Activated CD4-positive, alpha-beta T cell treated with anti-CD3 and anti-CD28 coated beads for 36 hours (primary cell): ENCODE measurements at regions of chr10 and their contacts with region 1.

Region 1: DNA sequence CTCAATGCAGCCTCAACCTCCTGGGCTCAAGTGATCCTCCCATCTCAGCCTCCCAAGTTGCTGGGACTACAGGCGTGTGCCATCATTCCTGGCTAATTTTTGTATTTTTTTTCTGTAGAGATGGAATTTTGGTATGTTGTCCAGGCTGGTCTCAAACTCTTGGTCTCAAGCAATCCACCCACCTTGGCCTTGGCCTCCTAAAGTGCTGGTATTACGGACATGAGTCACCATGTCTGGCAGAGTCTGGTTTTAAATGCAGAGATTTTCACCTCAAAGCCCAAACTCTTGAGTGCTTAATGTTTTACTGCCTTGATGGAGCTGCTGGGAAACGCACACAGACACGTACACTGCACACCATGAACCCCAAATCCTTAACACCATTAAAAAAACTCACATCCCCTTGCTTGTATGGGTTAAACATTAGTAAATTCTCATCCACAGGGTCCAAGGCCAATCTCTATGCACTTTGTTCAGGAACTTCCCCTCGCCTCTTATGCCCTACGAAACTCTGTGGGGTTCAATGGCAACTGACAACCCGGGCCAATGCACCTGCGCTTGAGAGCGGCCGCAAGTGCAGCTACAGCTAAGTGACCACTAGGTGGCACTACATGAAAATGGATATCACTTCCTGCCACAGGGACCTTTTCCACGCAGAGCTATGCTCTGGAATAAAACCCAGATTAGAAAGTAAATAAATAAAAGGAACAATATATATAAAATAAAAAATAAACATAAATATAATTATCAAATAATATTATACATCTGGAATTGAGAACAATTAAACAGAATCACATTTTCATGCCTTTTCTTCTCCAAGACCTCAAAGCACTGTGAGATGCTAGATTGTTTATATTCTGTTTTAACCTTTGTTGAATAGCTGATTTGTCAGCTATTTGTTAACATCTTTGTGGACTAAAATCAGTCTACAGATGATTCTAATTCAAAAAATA is 66.9 kb upstream of the AFAP1L2 start:
- DNase-seq: peak; percentile 79
- ATAC-seq: peak; percentile 87
- H3K4me3 Mint-ChIP-seq: no peak overlapping the region
- H3K27ac Mint-ChIP-seq: peak overlapping the region; percentile 27
- H3K4me1 Mint-ChIP-seq: peaks cover 21% of the 10 kb centered on the region
- H3K27me3 Mint-ChIP-seq: no peaks in the 10 kb centered on the region

Region 2: DNA sequence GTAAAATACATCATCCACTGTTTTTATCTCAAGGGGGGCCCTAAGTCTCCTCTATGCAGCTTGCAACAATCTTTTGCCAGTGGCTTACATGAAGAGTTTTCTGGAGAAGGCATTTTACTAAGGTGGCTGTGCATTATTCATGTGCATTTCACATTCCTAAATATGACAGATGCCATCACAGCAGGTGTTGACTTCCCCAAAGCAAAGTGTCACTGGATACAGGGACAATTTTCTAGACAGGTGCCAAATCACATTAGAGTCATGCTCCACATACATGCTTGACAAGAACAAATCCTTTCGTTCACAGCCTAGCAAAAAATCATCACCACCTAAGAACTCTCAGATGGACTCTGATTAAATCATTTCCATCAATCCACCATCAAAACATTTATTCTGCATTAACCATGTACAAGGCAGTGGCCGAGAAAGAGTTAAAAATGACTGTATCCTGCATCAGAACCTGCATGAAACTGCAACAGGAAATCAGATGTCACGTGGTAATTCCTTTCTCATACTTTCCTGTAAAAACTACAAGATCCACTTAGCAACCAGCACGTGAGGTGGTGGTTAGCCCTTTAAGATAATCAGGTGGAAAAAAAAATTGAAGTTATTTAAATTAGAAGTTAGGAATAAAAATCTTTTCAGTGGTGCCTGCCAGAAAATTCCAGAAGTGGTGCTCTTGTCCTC is 21.3 kb after region 1 on chr10:
- CTCF ChIA-PET with region 1: interaction called, 69 read pairs
- POLR2A ChIA-PET with region 1: interaction called, 4 read pairs
- intact Hi-C with region 1: no loop called
- DNase-seq: peak; percentile 69
- ATAC-seq: peak; percentile 60
- H3K4me3 Mint-ChIP-seq: peak overlapping the region; percentile 34
- H3K27ac Mint-ChIP-seq: peak overlapping the region; percentile 92
- H3K4me1 Mint-ChIP-seq: peaks cover 90% of the 10 kb centered on the region
- H3K27me3 Mint-ChIP-seq: no peaks in the 10 kb centered on the region

Region 3: DNA sequence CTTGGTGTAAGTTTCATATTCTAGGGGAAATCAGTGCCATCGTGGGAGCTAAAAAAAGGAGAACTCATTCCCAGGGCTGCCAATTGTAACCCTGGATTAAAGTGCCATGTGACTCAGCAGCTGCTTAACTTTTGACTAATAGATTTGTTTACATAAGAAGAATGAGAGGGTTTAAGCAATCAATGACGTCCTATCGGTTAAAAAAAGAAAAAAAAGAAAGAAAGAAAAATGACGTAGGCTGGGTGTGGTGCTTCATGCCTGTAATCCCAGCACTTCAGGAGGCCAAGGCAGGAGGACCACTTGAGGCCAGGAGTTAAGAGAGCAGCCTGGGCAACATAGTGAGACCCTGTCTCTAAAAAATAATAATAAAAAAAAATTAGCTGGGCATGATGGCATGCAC is 49.2 kb after region 1 on chr10:
- CTCF ChIA-PET with region 1: interaction called, 34 read pairs
- POLR2A ChIA-PET with region 1: interaction called, 6 read pairs
- intact Hi-C with region 1: no loop called
- DNase-seq: no peak
- ATAC-seq: peak; percentile 17
- H3K4me3 Mint-ChIP-seq: peak overlapping the region; percentile 54
- H3K27ac Mint-ChIP-seq: peak overlapping the region; percentile 92
- H3K4me1 Mint-ChIP-seq: peaks cover 95% of the 10 kb centered on the region
- H3K27me3 Mint-ChIP-seq: no peaks in the 10 kb centered on the region

Region 4: GRCh38 chr10:114550756-114551635 is 79.8 kb after region 1 on chr10:
- CTCF ChIA-PET with region 1: interaction called, 79 read pairs
- POLR2A ChIA-PET with region 1: interaction called, 3 read pairs
- intact Hi-C with region 1: loop called (anchors 1 kb)
- DNase-seq: no peak
- ATAC-seq: no peak
- H3K4me3 Mint-ChIP-seq: no peak overlapping the region
- H3K27ac Mint-ChIP-seq: no peak overlapping the region
- H3K4me1 Mint-ChIP-seq: peaks cover 28% of the 10 kb centered on the region
- H3K27me3 Mint-ChIP-seq: no peaks in the 10 kb centered on the region

Region 5: GRCh38 chr10:114703377-114704107 is 232.3 kb after region 1 on chr10:
- CTCF ChIA-PET with region 1: interaction called, 5 read pairs
- POLR2A ChIA-PET with region 1: no interaction called
- intact Hi-C with region 1: loop called (anchors 2 to 5 kb)
- DNase-seq: peak; percentile 28
- ATAC-seq: peak; percentile 30
- H3K4me3 Mint-ChIP-seq: no peak overlapping the region
- H3K27ac Mint-ChIP-seq: no peak overlapping the region
- H3K4me1 Mint-ChIP-seq: no peaks in the 10 kb centered on the region
- H3K27me3 Mint-ChIP-seq: peaks cover 3% of the 10 kb centered on the region